ENCODE measurements at regions of chr2 and their contacts with region 1.

Region 1: DNA sequence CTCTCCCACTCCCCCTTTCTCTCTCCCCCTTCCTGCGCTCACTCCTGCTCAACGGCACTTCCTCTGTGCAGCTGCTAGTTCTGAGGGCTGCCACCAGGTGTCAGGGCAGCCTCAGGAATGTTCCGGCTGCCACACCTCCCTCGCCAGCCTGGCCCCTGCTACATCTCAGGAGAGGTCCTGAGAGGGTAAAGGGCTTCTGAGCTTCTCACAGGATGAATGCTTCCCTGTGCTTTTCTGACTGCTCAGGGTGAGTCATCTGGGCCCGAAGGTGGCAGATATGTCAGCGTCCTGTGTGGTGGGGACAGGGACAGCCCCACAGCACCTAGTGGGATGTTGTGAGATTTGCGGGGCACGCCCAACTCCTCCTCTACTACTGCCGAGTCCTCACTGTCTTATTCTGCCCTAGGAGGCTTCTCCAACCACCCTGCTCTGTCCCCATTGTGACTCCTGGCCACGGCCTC is 49.0 kb downstream of the PLEKHB2 start:
- DNase-seq: peak; percentile 65 to 72
- ATAC-seq: peak; percentile 84 to 93
- H3K4me3 ChIP-seq: no peak overlapping the region
- H3K27ac ChIP-seq: no peak overlapping the region
- H3K4me1 ChIP-seq: no peaks in the 10 kb centered on the region
- CTCF ChIP-seq: peak; percentile 94
- EP300 ChIP-seq: no peak
- POLR2A ChIP-seq: no peak
- RAD21 ChIP-seq: peak; percentile 95

Region 2: DNA sequence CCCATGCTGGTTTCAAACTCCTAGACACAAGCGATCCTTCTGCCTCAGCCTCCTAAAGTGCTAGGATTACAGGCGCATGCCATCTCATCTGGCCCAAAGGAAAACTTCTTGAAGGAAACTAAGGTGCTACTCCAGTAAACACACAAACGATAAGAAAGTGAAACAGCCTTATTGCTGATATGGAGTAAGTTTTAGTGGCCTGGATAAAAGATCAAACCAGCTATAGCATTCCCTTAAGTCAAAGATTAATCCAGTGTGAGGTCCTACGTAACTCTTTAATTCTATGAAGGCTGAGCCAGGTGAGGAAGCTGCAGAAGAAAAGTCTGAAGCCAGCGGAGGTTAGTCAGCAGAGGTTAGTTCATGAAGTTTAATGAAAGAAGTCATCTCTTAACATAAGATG is 14.4 kb after region 1 on chr2:
- CTCF ChIA-PET with region 1: interaction called, 21 read pairs
- POLR2A ChIA-PET with region 1: no interaction called
- DNase-seq: no peak
- ATAC-seq: no peak
- H3K4me3 ChIP-seq: no peak overlapping the region
- H3K27ac ChIP-seq: no peak overlapping the region
- H3K4me1 ChIP-seq: no peaks in the 10 kb centered on the region
- CTCF ChIP-seq: no peak
- EP300 ChIP-seq: no peak
- POLR2A ChIP-seq: no peak
- RAD21 ChIP-seq: no peak

Region 3: GRCh38 chr2:131413148-131413747 is 259.1 kb after region 1 on chr2:
- CTCF ChIA-PET with region 1: interaction called, 11 read pairs
- POLR2A ChIA-PET with region 1: no interaction called
- DNase-seq: peak; percentile 24 to 53
- ATAC-seq: peak; percentile 85 to 92
- H3K4me3 ChIP-seq: no peak overlapping the region
- H3K27ac ChIP-seq: no peak overlapping the region
- H3K4me1 ChIP-seq: no peaks in the 10 kb centered on the region
- CTCF ChIP-seq: peak; percentile 80
- EP300 ChIP-seq: no peak
- POLR2A ChIP-seq: no peak
- RAD21 ChIP-seq: peak; percentile 83 to 84

Region 4: DNA sequence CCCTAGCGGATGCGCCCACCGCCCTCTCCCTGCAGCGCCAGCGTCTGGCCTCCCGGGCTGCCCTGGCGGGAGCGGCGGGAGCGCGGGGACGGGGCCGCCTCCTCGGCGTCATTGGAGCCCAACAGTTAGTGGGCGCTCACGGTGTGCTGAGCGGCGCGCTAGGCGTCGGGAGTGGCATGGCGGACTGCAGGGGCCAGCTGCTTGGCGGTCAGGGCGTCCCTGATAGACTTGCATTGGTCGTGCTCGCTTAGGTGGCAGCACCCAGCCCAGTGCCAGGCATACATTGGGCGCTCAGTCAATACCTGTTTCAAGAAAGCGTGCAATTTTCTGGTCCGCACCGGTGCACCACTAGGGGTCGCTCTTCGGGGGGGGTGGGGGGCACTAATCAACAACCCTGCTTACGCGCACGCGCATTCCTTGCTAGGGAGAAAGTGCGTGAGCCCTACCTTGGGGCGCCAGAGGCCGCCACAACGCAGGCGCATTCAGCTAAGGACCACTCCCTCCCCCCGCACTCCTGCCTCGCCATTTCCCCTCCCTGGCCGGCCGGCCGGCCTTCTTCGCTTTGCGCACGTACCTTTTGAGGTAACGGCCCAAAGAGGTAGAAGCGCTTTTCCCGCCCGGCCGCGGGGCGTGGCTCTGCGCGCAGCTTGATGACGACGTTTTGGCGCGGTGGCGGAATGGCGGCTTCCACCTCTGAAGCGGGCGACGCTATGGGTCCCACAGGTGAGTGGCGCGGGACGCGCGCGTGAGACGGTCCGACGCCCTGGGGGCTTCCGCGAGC is 338.5 kb after region 1 on chr2:
- CTCF ChIA-PET with region 1: interaction called, 10 read pairs
- POLR2A ChIA-PET with region 1: no interaction called
- DNase-seq: peak; percentile 93 to 98
- ATAC-seq: peak; percentile 83 to 89
- H3K4me3 ChIP-seq: peak overlapping the region; percentile 99
- H3K27ac ChIP-seq: peak overlapping the region; percentile 98 to 99
- H3K4me1 ChIP-seq: peaks cover 26% of the 10 kb centered on the region; the same call in 2 of the 3 replicates
- CTCF ChIP-seq: peak; percentile 85
- EP300 ChIP-seq: no peak
- POLR2A ChIP-seq: peak; percentile 55
- RAD21 ChIP-seq: peak; percentile 5 to 31; a peak in 2 of 5 replicates

Region 5: GRCh38 chr2:131673392-131674173 is 519.5 kb after region 1 on chr2:
- CTCF ChIA-PET with region 1: interaction called, 26 read pairs
- POLR2A ChIA-PET with region 1: no interaction called
- DNase-seq: peak; percentile 59 to 78
- ATAC-seq: peak; percentile 95 to 98
- H3K4me3 ChIP-seq: peak overlapping the region; percentile 50
- H3K27ac ChIP-seq: peak overlapping the region in 1 of 2 experiments; percentile 29; a peak in 1 of 6 replicates
- H3K4me1 ChIP-seq: no peaks in the 10 kb centered on the region
- CTCF ChIP-seq: peak; percentile 79
- EP300 ChIP-seq: no peak
- POLR2A ChIP-seq: no peak
- RAD21 ChIP-seq: peak; percentile 74 to 79

Region 6: DNA sequence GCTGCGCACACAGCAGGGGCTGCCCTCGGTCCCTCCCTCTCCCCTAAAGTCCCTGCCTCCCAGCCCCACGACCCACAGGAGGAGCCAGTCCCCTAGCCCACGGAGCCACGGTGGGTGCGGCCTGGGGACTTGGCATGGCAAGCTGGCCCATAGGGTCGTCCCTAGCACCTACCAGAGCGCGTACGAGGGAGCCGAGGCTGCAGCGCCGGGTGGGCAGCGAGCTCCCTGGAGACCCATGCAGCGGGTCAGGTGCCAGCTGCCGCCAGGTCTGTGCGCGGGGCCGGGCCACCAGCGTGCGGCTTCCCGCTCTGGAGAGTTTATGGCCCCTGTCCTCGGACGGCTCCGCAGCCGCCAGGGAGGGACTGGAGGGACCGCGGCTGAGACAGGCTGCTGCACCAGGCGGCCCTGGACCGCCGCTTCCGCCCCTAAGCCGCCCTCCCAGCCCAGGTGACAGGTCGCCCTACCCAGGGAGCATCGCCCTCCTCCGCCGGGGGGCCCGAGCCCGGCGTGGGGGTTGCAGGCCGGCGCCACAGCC is 647.2 kb after region 1 on chr2:
- CTCF ChIA-PET with region 1: interaction called, 12 read pairs
- POLR2A ChIA-PET with region 1: no interaction called
- DNase-seq: no peak
- ATAC-seq: peak in 1 of 2 experiments; percentile 33; a peak in 1 of 6 replicates
- H3K4me3 ChIP-seq: no peak overlapping the region; the same call in 2 of the 3 replicates
- H3K27ac ChIP-seq: no peak overlapping the region
- H3K4me1 ChIP-seq: no peaks in the 10 kb centered on the region
- CTCF ChIP-seq: no peak
- EP300 ChIP-seq: no peak
- POLR2A ChIP-seq: no peak
- RAD21 ChIP-seq: no peak

Measured in A549 (cell line).